Posterior vena cava (tissue), 2 donors: ENCODE measurements at regions of chr2 and their contacts with region 1.

Region 1: DNA sequence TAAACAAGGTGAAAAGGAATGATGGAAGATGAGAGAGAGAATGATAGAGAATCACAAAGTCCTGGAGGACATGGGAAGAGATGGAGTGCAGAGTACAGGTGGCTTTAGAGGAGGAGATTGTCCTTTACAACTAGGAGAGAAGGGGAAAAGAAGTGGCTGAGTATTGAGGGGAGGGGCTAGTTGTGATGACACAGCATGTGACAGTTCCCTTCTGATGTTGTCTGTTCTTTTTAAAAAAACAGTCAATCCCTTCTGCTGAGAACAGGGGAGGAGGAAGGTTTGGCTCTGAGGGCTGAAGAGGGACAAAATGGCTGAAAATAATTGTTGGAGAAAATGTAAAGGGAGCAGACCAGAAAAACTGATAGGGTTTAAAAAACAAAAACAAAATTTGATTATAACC is 44.0 kb downstream of the STEAP3 start:
- DNase-seq: no peak

Region 2: DNA sequence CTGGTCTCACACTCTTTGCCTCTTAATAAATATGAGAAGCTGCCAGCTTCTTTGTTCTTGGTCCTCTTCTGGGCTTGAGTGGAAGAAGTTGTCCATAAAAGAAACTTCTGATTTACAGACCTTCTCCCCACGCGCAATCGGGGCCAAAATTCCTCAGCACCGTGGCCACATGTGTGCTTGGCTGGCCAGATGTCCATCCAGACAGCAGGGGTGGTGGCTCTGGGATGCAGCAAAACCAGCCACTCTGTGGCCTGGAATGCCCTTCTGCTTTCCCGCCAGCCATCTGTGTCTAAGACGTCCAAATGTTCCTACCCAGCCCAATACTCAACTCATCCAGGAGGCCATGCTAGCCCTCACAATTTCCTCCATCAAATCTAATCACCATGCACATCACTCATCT is 671.0 kb before region 1 on chr2:
- intact Hi-C with region 1: no loop called
- DNase-seq: no peak

Region 3: GRCh38 chr2:118954297-118955060 is 313.1 kb before region 1 on chr2:
- intact Hi-C with region 1: no loop called
- DNase-seq: no peak

Region 4: DNA sequence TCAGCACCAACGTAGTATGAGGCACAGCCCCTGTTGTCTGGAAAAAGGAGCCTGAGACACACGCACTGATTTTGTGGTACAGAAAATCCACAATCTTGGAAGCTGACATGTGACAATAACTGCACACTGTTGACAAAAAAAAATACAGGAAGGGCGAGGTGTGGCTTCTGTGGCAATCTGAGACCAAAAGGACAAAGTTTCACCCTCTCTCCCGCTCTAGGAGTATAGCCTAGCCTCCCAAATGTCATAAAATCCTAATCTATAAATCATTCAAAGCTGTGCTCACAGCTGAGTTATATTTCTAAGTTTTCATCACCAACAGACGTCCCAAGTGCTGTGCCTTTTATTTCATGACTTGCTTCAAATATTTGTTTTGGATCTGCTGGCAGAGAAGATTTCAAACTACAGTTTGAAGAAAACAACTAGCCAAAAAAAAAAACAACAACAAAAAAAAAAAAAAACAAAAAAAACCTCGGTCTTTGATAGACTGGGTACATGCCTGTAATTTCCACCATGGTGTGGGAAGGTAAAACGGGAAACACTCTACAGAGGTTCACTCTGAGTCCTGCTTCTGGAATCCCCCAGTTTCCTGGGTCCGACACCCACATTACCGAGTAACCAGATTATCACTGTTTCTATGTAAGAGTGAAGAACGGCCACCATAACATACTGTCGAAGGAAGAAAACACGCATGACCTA is 38.0 kb after region 1 on chr2:
- intact Hi-C with region 1: loop called in 1 of 2 experiments (anchors 2 kb)
- DNase-seq: no peak